Caco-2 (cell line): ENCODE measurements at regions of chr20 and their contacts with region 1.

Region 1: GRCh38 chr20:41955999-41956705 is 338.0 kb upstream of the CHD6 start:
- DNase-seq: peak; percentile 50 to 61
- H3K4me3 ChIP-seq: no peak overlapping the region
- H3K4me3 Mint-ChIP-seq: no peak overlapping the region
- H3K27ac Mint-ChIP-seq: no peak overlapping the region
- H3K4me1 ChIP-seq: no peaks in the 10 kb centered on the region
- H3K4me1 Mint-ChIP-seq: no peaks in the 10 kb centered on the region
- H3K27me3 ChIP-seq: no peaks in the 10 kb centered on the region
- H3K27me3 Mint-ChIP-seq: peaks cover 6% of the 10 kb centered on the region
- CTCF ChIP-seq: peak; percentile 65 to 80

Region 2: DNA sequence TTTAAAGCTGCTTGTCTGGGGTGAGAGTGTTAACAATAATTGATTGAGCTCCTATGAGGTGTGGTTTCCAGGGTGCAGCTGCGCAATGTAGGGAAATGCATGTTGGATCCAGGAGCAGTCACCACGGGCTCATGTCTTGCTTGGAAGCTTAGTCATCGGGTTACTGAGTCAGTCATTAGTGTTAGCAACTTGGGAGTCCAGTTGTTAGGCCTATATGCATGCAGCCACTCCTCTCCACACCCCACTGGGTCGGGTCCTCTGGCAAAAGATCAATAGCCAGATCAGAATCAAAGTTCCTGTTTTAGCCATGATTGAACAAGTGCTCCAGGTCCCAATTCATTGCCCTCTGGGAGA is 66.3 kb before region 1 on chr20:
- CTCF ChIA-PET with region 1: no interaction called
- POLR2A ChIA-PET with region 1: no interaction called
- intact Hi-C with region 1: no loop called
- DNase-seq: no peak
- H3K4me3 ChIP-seq: no peak overlapping the region
- H3K4me3 Mint-ChIP-seq: no peak overlapping the region
- H3K27ac Mint-ChIP-seq: no peak overlapping the region
- H3K4me1 ChIP-seq: no peaks in the 10 kb centered on the region
- H3K4me1 Mint-ChIP-seq: no peaks in the 10 kb centered on the region
- H3K27me3 ChIP-seq: no peaks in the 10 kb centered on the region; the same call in 1 of the 2 replicates
- H3K27me3 Mint-ChIP-seq: peaks cover 19% of the 10 kb centered on the region
- CTCF ChIP-seq: no peak

Region 3: GRCh38 chr20:41927189-41927588 is 29.0 kb before region 1 on chr20:
- CTCF ChIA-PET with region 1: no interaction called
- POLR2A ChIA-PET with region 1: no interaction called
- intact Hi-C with region 1: no loop called
- DNase-seq: no peak
- H3K4me3 ChIP-seq: no peak overlapping the region
- H3K4me3 Mint-ChIP-seq: no peak overlapping the region
- H3K27ac Mint-ChIP-seq: no peak overlapping the region
- H3K4me1 ChIP-seq: no peaks in the 10 kb centered on the region
- H3K4me1 Mint-ChIP-seq: no peaks in the 10 kb centered on the region
- H3K27me3 ChIP-seq: no peaks in the 10 kb centered on the region
- H3K27me3 Mint-ChIP-seq: peaks cover 22% of the 10 kb centered on the region
- CTCF ChIP-seq: no peak

Region 4: GRCh38 chr20:41969656-41970055 is 13.5 kb after region 1 on chr20:
- CTCF ChIA-PET with region 1: no interaction called
- POLR2A ChIA-PET with region 1: no interaction called
- intact Hi-C with region 1: no loop called
- DNase-seq: no peak
- H3K4me3 ChIP-seq: no peak overlapping the region
- H3K4me3 Mint-ChIP-seq: no peak overlapping the region
- H3K27ac Mint-ChIP-seq: no peak overlapping the region
- H3K4me1 ChIP-seq: peaks cover 3% of the 10 kb centered on the region; the same call in 1 of the 2 replicates
- H3K4me1 Mint-ChIP-seq: no peaks in the 10 kb centered on the region
- H3K27me3 ChIP-seq: no peaks in the 10 kb centered on the region
- H3K27me3 Mint-ChIP-seq: peaks cover 15% of the 10 kb centered on the region
- CTCF ChIP-seq: no peak

Region 5: DNA sequence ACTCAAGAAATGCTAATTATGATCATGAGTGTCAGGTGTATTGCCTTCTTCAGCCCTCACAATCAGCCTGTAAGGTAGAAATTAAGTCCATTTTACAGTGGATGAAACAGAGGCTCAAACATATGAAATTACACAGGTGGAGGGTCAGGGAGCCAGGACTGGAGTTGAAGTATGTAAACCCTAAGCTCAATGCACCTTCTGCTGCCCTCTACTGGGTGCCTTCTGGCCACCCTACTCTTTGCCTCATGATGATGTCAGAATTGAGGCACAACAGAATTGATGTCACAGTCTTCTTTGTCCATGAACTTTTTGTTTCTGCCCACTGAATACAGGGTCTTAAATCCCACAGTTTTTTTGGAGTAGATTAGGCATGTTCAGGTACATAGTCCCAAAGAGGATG is 62.8 kb after region 1 on chr20:
- CTCF ChIA-PET with region 1: interaction called, 6 read pairs
- POLR2A ChIA-PET with region 1: no interaction called
- intact Hi-C with region 1: loop called (anchors 1 kb)
- DNase-seq: peak in 1 of 2 experiments; percentile 34
- H3K4me3 ChIP-seq: no peak overlapping the region
- H3K4me3 Mint-ChIP-seq: no peak overlapping the region
- H3K27ac Mint-ChIP-seq: no peak overlapping the region
- H3K4me1 ChIP-seq: no peaks in the 10 kb centered on the region
- H3K4me1 Mint-ChIP-seq: no peaks in the 10 kb centered on the region
- H3K27me3 ChIP-seq: 0 out of 2 replicates have a peak, but pooled peaks cover 1% of the 10 kb centered on the region
- H3K27me3 Mint-ChIP-seq: peaks cover 2% of the 10 kb centered on the region
- CTCF ChIP-seq: peak; percentile 55 to 69

Region 6: DNA sequence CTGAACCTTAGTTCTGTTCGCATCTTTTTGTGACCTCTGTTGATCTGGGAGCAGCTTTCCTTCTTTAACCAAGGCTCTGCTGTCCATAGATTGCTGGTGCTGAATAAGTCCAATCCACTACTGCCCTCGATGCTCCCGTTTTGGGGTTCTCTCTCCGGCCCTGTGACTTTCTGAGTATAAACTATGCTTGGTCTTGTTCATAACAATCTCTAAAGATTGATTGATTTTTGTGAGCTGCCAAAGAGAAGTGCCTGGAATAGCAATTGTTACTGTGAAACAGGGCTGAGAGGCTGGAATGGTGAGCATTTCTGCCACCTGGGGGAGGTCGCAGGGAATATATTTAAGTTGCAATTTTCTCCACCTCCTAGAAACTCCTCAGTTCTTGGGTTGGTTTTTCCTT is 84.9 kb after region 1 on chr20:
- CTCF ChIA-PET with region 1: interaction called, 4 read pairs
- POLR2A ChIA-PET with region 1: no interaction called
- intact Hi-C with region 1: loop called (anchors 1 kb)
- DNase-seq: peak in 1 of 2 experiments; percentile 49
- H3K4me3 ChIP-seq: no peak overlapping the region
- H3K4me3 Mint-ChIP-seq: no peak overlapping the region
- H3K27ac Mint-ChIP-seq: no peak overlapping the region
- H3K4me1 ChIP-seq: no peaks in the 10 kb centered on the region
- H3K4me1 Mint-ChIP-seq: no peaks in the 10 kb centered on the region
- H3K27me3 ChIP-seq: no peaks in the 10 kb centered on the region
- H3K27me3 Mint-ChIP-seq: peaks cover 6% of the 10 kb centered on the region
- CTCF ChIP-seq: peak; percentile 62 to 69

Region 7: DNA sequence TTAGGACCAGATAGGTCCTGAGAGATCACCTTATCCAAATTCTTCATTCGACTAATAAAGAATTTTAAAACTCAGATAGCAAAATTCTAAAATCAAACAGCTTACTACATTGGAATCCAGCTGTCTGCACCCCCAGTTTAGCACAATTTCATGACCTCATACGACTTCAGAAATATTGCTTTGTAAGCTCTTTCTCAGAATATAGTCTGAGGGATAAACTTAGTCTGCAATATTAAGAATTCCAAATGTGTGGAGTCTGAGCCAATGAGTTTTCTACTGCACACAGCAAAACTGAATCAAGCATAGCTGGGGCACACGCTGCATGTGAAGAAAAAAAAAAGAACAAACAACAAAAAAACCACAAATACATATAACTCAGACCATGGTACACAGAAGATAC is 203.7 kb after region 1 on chr20:
- CTCF ChIA-PET with region 1: no interaction called
- POLR2A ChIA-PET with region 1: no interaction called
- intact Hi-C with region 1: loop called (anchors 2 kb)
- DNase-seq: no peak
- H3K4me3 ChIP-seq: no peak overlapping the region
- H3K4me3 Mint-ChIP-seq: no peak overlapping the region
- H3K27ac Mint-ChIP-seq: no peak overlapping the region
- H3K4me1 ChIP-seq: no peaks in the 10 kb centered on the region
- H3K4me1 Mint-ChIP-seq: no peaks in the 10 kb centered on the region
- H3K27me3 ChIP-seq: no peaks in the 10 kb centered on the region
- H3K27me3 Mint-ChIP-seq: peaks cover 12% of the 10 kb centered on the region
- CTCF ChIP-seq: no peak